Dorsolateral prefrontal cortex (tissue), 120 donors: ENCODE measurements at regions of chr14 and their contacts with region 1.

Region 1: DNA sequence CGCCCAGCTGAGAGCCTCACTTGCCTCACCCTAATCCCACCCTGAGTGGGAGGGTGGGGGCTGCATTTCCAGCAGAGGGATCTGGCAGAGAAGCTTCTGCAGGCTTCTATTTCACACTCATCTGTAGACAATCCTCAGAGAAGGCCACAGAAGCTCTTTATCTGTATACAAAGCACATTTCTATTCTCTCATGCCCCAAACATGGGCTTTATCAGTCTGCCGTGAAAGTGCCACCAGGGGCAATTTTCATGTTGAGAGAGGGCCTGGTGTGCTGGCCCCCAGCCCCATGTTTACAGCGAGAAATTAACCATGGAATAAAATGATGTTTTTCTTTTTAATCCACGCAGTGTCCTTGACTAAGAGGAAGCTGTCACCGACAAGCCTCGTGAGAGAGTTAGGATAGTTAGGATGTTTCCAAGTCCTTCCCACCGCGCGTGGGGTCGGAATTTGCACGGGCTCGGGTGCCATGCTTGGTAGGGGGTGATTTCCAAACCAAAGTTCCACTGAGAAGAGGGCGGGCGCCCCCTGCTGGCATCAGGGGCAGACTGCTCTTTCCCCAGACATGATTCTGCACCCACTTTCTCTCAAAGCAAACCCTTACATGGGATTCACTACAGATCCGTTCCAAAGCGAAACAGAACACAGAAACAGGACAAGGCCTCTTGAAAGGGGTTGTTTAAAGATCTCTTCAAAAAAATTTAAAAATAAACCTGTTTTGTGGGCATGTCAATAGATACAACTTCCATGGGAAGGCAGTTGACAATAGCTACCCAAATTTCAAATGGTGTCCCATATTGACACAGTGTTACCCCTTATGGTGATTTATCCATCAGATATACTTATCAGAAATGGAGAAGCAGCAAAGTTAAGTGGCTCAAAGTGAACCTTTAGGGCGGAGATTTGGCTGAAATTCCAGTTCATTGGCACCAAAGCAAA is 19.4 kb downstream of the BDKRB1 start:
- DNase-seq: peak; percentile 78 to 88 (median 84)
- H3K4me3 ChIP-seq: peak overlapping the region in 29 of 59 donors; percentile 3 to 46 (median 25)
- H3K27ac ChIP-seq: peak overlapping the region; percentile 18 to 98 (median 87)
- H3K27me3 ChIP-seq: no peaks in the 10 kb centered on the region
- CTCF ChIP-seq: peak; percentile 88 to 99 (median 98)

Region 2: DNA sequence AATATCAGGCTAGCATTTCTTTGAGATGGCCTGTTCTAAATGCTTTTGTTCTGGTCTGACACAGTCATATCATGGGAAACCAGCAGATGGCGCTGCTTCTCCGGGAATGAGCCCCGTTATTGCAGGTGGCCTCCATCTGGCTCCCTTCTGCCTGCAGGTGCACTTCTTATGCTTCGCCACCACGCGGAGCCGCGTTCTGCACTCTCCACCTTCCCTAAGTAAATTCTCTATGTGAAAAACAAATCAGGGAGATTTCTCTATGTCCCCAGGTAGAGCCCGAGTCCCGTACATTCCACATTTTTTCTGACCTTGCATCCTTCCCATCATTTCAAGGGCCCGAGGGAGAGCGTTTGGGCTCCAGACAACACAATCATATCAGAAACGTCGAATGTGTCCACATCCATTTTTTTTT is 714.4 kb before region 1 on chr14:
- intact Hi-C with region 1: loop called in 1 of 2 experiments (anchors 10 kb)
- DNase-seq: peak; percentile 73 to 94 (median 88)
- H3K4me3 ChIP-seq: peak overlapping the region in 3 of 59 donors; percentile 2 to 9 (median 6)
- H3K27ac ChIP-seq: no peak overlapping the region
- H3K27me3 ChIP-seq: no peaks in the 10 kb centered on the region
- CTCF ChIP-seq: peak; percentile 89 to 100 (median 98)

Region 3: GRCh38 chr14:96001866-96002497 is 273.5 kb before region 1 on chr14:
- intact Hi-C with region 1: loop called (anchors 2 to 5 kb)
- DNase-seq: no peak
- H3K4me3 ChIP-seq: no peak overlapping the region
- H3K27ac ChIP-seq: no peak overlapping the region
- H3K27me3 ChIP-seq: peaks cover 0 to 27% (median 3%) of the 10 kb centered on the region in 45 donors
- CTCF ChIP-seq: no peak

Region 4: GRCh38 chr14:96146131-96146806 is 129.2 kb before region 1 on chr14:
- intact Hi-C with region 1: loop called in 1 of 2 experiments (anchors 1 kb)
- DNase-seq: peak in 9 of 10 donors; percentile 9 to 79 (median 63)
- H3K4me3 ChIP-seq: peak overlapping the region in 1 of 59 donors; percentile 3
- H3K27ac ChIP-seq: peak overlapping the region in 53 of 59 donors; percentile 0 to 94 (median 71)
- H3K27me3 ChIP-seq: peaks cover 0 to 3% (median 0%) of the 10 kb centered on the region in 45 donors
- CTCF ChIP-seq: peak in 25 of 56 donors; percentile 1 to 53 (median 26)

Region 5: GRCh38 chr14:96215452-96216244 is 59.8 kb before region 1 on chr14:
- intact Hi-C with region 1: no loop called
- DNase-seq: peak in 1 of 10 donors; percentile 57
- H3K4me3 ChIP-seq: no peak overlapping the region
- H3K27ac ChIP-seq: peak overlapping the region in 18 of 59 donors; percentile 2 to 65 (median 24)
- H3K27me3 ChIP-seq: no peaks in the 10 kb centered on the region
- CTCF ChIP-seq: no peak

Region 6: GRCh38 chr14:96424109-96424989 is 148.9 kb after region 1 on chr14:
- intact Hi-C with region 1: loop called in 1 of 2 experiments (anchors 5 kb)
- DNase-seq: peak in 2 of 10 donors; percentile 15 to 52
- H3K4me3 ChIP-seq: peak overlapping the region; percentile 27 to 70 (median 55)
- H3K27ac ChIP-seq: peak overlapping the region in 23 of 59 donors; percentile 9 to 89 (median 72)
- H3K27me3 ChIP-seq: no peaks in the 10 kb centered on the region
- CTCF ChIP-seq: peak; percentile 72 to 96 (median 86)